Posterior vena cava (tissue), 2 donors: ENCODE measurements at regions of chr15 and their contacts with region 1.

Region 1: DNA sequence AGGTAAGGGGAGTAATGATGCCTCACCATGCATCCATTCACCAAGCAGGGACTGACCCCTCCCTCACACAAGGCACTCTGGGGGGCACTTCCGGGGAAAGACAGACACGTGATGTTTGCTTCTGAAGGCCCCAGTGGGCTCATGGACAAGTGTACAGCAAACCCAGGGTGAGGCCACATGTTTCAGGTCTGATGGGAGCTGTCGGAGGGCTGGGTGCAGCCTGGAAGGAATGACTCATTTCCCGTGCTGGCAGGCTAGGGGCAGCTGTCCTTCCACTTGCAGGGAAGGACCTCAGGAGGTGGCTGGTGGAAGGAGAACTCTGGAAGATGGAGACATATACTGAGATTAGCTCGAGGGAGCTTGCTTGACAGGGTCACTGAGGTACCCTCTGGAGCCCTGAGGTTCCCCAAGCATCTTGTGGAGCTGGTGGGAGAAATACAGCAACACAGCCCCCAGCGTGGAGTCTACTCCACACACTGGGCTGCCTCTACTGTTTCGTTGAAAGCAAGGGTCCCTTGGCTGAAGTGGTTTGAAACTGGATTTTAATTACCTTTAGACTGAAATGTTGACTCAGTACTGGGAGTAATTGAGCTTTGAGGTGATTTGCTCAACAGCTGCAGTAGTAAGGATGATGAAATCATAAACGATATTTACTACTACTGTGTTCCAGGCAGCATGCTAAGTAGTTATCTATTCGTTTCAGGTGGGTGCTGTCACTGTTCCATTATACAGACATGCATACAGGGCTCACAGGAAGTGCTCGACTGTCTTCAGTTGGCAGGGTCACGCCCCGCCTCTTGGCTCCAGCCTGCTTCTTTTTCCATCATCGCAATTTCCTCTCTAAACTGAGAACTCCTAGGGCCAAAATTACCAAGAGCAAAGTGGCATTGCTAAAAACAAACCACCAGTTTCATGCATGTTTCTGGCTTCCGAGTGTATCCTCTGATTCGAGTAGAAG is 230.4 kb downstream of the ADAMTS17 start:
- DNase-seq: peak; percentile 90

Region 2: GRCh38 chr15:99019558-99020540 is 1091.5 kb before region 1 on chr15:
- intact Hi-C with region 1: loop called in 1 of 2 experiments (anchors 5 kb)
- DNase-seq: no peak

Region 3: DNA sequence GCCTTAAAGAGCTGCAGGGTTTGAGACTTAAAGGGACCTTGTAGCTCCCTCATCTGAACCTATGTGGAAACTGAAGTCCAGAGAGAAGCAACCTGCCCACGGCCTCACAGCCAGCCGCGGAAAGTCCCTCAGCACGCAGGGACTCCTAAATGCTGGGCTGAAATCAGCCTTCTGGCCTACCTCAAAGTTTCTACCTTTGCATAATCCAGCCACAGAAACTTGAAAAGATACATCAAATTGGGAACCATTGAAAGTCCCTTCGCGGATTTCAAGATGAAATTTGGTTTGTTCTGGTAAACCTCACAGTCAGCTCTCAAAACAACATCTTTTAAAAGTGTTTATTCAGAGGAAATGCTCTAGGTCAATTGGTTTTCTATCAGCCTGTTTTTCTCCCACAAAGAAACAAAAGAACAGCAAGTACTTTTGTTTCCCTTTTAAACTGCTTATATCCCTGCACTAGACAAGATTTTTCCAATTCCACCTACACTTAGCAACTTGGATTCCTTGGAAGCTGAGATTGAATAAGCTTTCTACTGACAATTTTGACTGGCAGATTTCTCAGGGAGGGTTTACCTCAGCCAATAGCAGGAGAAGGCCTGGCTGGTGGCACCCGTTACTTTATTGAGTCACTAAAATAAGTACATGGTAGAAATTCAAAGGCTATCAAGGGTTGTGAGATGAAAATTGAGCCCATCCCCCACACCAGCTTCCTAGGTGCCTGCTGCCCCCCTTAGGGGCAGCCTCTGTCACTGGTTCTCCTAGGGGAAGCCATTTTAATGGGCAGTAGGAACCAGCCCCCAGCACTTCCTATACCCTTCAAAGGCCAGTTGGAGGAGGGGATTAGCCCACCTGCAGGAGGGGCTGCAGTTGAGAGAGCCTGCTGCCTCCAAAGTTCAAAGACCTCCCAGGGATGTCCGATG is 59.2 kb after region 1 on chr15:
- intact Hi-C with region 1: no loop called
- DNase-seq: no peak

Region 4: GRCh38 chr15:100311154-100311625 is 199.8 kb after region 1 on chr15:
- intact Hi-C with region 1: loop called in 1 of 2 experiments (anchors 10 kb)
- DNase-seq: no peak

Region 5: DNA sequence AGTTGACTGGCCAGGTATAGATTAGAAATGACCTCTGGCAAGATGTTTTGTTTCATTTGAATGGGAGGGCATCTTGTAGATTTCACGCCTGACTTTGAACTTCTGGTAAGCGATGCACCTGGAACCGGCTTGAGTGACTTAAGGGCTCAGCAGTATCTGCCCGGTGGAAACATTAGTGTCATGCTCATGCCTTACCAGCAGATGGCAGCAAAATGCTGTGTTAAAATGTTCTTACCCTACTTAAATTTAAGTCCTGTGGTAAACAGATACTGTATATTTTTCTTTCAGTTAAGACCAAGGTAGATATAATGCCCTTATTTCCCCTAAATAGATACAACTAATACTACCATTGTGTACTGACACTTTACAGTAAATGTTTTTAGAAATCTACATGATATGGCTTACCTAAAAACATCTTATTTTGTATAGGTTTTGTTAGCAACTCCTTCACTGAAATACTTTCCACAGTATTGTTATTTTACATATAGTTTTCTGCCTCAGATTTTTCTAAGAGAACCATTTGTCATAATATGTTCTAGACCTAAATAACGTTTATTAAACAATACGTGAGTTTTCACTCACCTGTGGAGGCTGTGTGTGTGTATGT is 516.5 kb after region 1 on chr15:
- intact Hi-C with region 1: no loop called
- DNase-seq: no peak